Activated CD4-positive, alpha-beta memory T cell treated with anti-CD3 and anti-CD28 coated beads, Interleukin-2, amount 10 ng/mL, durations not matched to agents 7 days and 5 days (primary cell): ENCODE measurements at regions of chr1 and their contacts with region 1.

Region 1: GRCh38 chr1:109548321-109549267 is at the start of gene GNAI3:
- DNase-seq: peak; percentile 98
- H3K4me3 Mint-ChIP-seq: peak within 1 kb of the TSS; percentile 94
- H3K27ac Mint-ChIP-seq: peak within 1 kb of the TSS; percentile 99
- H3K4me1 Mint-ChIP-seq: peaks cover 46% of the 10 kb centered on the region
- H3K27me3 Mint-ChIP-seq: no peaks in the 10 kb centered on the region
- total RNA-seq, gene GNAI3: 9.4 to 9.6 TPM

Region 2: DNA sequence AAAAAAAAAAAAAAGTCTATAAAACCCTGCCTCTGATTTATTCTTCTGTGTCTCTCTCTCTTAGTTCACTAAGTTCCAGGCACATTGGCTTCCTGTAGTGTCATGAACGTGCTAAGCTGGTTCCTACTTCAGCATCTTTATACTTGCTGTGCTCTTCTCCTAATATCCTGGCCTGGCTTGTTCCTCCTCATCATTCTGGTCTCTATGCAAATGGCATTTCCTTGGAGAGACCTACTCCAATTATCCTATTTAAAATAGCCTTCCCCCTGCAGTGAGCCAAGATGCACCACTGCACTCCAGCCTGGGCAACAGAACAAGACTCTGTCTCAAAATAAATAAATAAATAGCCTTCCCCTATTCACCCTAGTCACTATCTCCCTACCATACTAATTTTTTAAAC is 575.6 kb before region 1 on chr1:
- CTCF ChIA-PET with region 1: no interaction called
- POLR2A ChIA-PET with region 1: no interaction called
- DNase-seq: no peak
- H3K4me3 Mint-ChIP-seq: no peak overlapping the region
- H3K27ac Mint-ChIP-seq: no peak overlapping the region
- H3K4me1 Mint-ChIP-seq: peaks cover 6% of the 10 kb centered on the region
- H3K27me3 Mint-ChIP-seq: no peaks in the 10 kb centered on the region

Region 3: DNA sequence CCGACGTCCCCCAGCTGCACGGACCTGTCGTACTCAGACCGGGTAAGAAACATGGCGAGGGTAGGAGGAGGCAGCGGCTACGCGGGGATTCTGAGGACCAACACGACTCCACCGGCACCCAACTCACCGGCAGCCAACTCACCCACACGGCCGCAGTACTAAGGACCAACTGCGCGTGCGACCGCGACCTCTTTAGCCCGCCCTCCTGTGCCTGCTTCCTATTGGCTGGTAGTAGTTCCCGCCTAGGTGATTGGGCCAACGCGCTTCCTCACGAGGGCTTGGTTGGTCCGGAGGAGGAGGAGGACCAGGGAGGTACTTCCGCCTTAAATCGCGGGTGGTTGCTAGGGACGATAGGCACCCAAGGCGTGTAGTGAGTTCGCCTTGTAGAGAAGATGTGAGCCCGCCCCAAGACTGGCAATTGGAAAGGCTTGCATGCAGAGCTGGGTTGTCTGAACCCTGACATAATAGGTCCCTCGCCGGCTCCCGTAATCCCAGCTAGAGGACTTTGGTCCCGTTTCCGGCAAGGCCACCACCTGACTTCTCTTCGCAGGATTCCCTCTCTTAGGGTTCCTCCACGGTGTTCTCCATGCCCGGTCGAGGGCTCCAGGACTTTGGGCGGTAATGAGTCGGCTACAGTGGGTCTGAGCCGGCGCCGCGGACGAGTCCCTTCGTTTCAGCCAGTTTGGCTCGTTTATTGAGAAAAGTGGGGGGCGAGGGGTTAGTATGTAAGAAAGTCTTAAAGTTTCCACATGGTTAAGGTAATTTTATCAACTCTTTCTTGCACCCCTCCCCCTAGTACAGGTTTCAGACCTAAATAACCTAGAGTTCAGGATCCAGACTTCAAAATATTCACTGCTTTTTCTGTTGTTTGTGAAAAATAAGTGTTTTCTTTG is 122.1 kb before region 1 on chr1 and contains the start of gene PSMA5:
- CTCF ChIA-PET with region 1: no interaction called
- POLR2A ChIA-PET with region 1: interaction called, 31 read pairs
- DNase-seq: peak; percentile 97
- H3K4me3 Mint-ChIP-seq: peak within 1 kb of the TSS; percentile 96
- H3K27ac Mint-ChIP-seq: peak within 1 kb of the TSS; percentile 99
- H3K4me1 Mint-ChIP-seq: peaks cover 35% of the 10 kb centered on the region
- H3K27me3 Mint-ChIP-seq: no peaks in the 10 kb centered on the region
- total RNA-seq, gene PSMA5: 170 to 189 TPM

Region 4: GRCh38 chr1:109532365-109533136 is 16.0 kb before region 1 on chr1:
- CTCF ChIA-PET with region 1: interaction called, 52 read pairs
- POLR2A ChIA-PET with region 1: interaction called, 20 read pairs
- DNase-seq: peak; percentile 92
- H3K4me3 Mint-ChIP-seq: peak overlapping the region; percentile 48
- H3K27ac Mint-ChIP-seq: peak overlapping the region; percentile 90
- H3K4me1 Mint-ChIP-seq: peaks cover 22% of the 10 kb centered on the region
- H3K27me3 Mint-ChIP-seq: no peaks in the 10 kb centered on the region

Region 5: GRCh38 chr1:109610609-109611307 is 62.2 kb after region 1 on chr1:
- CTCF ChIA-PET with region 1: interaction called, 10 read pairs
- POLR2A ChIA-PET with region 1: interaction called, 22 read pairs
- DNase-seq: no peak
- H3K4me3 Mint-ChIP-seq: no peak overlapping the region
- H3K27ac Mint-ChIP-seq: no peak overlapping the region
- H3K4me1 Mint-ChIP-seq: peaks cover 2% of the 10 kb centered on the region
- H3K27me3 Mint-ChIP-seq: no peaks in the 10 kb centered on the region

Region 6: DNA sequence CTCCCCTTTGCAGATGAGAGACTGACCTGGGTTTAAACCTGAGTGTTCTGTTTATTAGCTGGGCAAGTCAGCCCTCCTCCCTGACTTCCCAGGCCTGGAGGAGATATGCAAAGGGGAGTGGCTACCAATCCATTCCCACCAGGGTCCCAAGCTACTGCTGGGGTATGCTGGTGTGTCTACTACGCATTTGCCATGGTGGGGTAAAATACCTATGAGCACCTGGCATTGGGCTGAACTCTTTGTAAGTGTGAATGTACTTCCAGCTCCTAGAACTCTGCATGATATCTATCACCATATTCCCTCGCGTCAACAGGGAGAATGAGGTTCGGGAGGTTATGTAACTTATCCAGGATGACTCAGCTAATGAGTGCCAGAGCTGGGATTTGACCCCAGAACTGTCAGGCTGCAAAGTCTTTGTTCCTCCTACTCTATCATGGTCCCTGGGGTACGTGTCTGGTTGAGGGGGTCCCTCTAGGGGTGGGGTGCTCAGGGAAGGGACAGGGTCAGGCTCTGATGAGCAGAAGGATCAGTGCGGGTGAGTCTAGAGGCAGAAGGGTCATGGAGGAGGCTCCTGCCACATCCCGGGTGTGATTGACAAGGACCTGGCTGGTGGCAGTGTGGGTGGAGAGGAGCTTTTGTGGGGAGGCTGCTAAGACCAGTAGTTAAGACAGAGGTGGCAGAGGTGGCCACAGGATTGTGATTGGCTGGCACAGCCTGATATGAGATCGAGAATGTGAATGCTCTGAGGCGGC is 87.8 kb after region 1 on chr1:
- CTCF ChIA-PET with region 1: interaction called, 101 read pairs
- POLR2A ChIA-PET with region 1: interaction called, 30 read pairs
- DNase-seq: no peak
- H3K4me3 Mint-ChIP-seq: no peak overlapping the region
- H3K27ac Mint-ChIP-seq: no peak overlapping the region
- H3K4me1 Mint-ChIP-seq: peaks cover 21% of the 10 kb centered on the region
- H3K27me3 Mint-ChIP-seq: peaks cover 3% of the 10 kb centered on the region

Region 7: GRCh38 chr1:109661391-109661790 is 112.8 kb after region 1 on chr1:
- CTCF ChIA-PET with region 1: no interaction called
- POLR2A ChIA-PET with region 1: no interaction called
- DNase-seq: no peak
- H3K4me3 Mint-ChIP-seq: no peak overlapping the region
- H3K27ac Mint-ChIP-seq: no peak overlapping the region
- H3K4me1 Mint-ChIP-seq: peaks cover 2% of the 10 kb centered on the region
- H3K27me3 Mint-ChIP-seq: no peaks in the 10 kb centered on the region

Region 8: GRCh38 chr1:109773146-109773899 is 224.7 kb after region 1 on chr1:
- CTCF ChIA-PET with region 1: interaction called, 44 read pairs
- POLR2A ChIA-PET with region 1: interaction called, 17 read pairs
- DNase-seq: peak; percentile 79
- H3K4me3 Mint-ChIP-seq: no peak overlapping the region
- H3K27ac Mint-ChIP-seq: no peak overlapping the region
- H3K4me1 Mint-ChIP-seq: peaks cover 17% of the 10 kb centered on the region
- H3K27me3 Mint-ChIP-seq: peaks cover 7% of the 10 kb centered on the region

Region 9: DNA sequence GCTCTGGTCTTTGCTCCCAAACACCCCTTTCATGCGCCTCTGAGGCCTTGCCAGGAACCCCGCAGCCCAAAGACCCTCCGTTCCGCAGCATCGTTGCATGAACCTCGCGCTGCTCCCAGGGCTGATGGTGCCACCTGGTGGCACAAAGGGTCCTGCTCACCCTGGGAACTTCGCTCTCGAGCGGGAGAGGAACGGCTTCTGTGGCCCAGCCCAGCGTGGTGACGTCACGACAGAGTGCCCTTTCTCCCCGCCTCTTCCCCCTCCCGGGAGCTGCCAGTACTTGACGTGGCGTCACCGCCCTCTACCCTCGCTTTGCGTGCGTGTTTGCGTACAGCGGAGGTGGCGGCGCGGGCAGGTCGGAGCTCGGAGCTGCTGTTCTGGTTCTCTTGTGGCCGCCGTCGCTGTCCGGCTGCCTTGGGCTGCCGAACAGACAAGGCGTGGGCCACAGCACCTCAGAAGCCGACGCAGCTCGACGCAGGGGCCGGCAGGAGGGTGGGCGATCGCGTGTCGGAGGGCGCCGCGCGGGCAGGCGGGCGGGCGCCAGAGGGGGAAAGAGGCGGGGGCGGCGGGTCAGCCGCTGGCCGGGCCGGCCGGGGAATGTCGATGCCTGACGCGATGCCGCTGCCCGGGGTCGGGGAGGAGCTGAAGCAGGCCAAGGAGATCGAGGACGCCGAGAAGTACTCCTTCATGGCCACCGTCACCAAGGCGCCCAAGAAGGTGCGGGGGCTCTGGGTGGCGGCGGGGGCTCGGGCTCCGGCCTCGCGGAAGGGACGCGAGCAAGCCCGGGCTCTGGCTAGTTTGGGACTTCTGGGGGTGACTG is 436.1 kb after region 1 on chr1 and contains the start of gene AHCYL1:
- CTCF ChIA-PET with region 1: interaction called, 28 read pairs
- POLR2A ChIA-PET with region 1: interaction called, 31 read pairs
- DNase-seq: peak; percentile 99
- H3K4me3 Mint-ChIP-seq: peak within 1 kb of the TSS; percentile 99
- H3K27ac Mint-ChIP-seq: peak within 1 kb of the TSS; percentile 84
- H3K4me1 Mint-ChIP-seq: peaks cover 41% of the 10 kb centered on the region
- H3K27me3 Mint-ChIP-seq: peaks cover 2% of the 10 kb centered on the region
- total RNA-seq, gene AHCYL1: 56.5 to 57.0 TPM